Naive thymus-derived CD4-positive, alpha-beta T cell (primary cell): ENCODE measurements at regions of chr12 and their contacts with region 1.

Region 1: DNA sequence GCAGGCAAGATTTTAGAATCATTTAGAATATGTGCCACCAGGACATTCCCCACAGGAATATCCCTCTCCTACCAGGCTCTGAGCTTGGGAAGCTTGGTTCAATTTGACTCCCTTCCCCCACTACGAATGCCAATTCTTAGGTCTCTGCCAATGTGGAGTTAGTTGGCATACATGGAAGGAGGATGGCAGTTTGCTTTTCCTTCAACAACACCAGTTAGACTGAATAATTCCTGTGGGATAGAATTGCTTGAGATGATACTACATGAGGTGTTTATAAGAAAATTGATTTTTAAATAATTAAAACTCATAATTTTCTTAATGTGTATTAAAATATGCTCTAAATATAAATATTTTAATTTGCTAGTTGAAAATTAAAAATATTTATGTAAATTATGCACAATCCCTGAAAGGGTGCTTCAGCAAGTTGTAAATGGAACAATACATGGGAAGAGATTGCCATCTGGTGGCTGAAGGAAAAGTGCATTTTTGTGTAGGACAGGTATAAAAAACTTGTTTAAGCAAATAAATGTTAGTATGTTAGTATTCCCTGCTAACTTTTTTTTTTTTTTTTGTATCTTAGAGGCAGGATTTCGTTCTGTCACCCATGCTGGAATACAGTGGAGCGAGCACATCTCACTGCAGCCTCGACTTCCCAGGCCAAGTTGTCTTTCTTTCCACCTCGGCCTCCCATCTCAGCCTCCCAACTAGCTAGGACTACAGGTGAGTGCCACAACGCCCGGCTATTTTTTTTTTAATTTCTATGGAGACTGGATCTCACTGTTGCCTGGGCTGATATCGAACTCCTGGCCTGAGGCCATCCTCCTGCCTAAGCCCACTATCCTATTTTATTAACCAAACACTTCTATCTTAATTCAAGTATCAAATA is 25.8 kb upstream of the STRAP start:
- DNase-seq: peak in 7 of 9 donors; percentile 45 to 72 (median 64)
- ATAC-seq: peak; percentile 60
- H3K4me3 ChIP-seq: no peak overlapping the region
- H3K4me3 Mint-ChIP-seq: no peak overlapping the region
- H3K27ac ChIP-seq: no peak overlapping the region
- H3K27ac Mint-ChIP-seq: no peak overlapping the region
- H3K4me1 ChIP-seq: no peaks in the 10 kb centered on the region
- H3K4me1 Mint-ChIP-seq: no peaks in the 10 kb centered on the region
- H3K27me3 ChIP-seq: no peaks in the 10 kb centered on the region
- H3K27me3 Mint-ChIP-seq: peaks cover 7 to 35% (median 13%) of the 10 kb centered on the region in 5 donors

Region 2: DNA sequence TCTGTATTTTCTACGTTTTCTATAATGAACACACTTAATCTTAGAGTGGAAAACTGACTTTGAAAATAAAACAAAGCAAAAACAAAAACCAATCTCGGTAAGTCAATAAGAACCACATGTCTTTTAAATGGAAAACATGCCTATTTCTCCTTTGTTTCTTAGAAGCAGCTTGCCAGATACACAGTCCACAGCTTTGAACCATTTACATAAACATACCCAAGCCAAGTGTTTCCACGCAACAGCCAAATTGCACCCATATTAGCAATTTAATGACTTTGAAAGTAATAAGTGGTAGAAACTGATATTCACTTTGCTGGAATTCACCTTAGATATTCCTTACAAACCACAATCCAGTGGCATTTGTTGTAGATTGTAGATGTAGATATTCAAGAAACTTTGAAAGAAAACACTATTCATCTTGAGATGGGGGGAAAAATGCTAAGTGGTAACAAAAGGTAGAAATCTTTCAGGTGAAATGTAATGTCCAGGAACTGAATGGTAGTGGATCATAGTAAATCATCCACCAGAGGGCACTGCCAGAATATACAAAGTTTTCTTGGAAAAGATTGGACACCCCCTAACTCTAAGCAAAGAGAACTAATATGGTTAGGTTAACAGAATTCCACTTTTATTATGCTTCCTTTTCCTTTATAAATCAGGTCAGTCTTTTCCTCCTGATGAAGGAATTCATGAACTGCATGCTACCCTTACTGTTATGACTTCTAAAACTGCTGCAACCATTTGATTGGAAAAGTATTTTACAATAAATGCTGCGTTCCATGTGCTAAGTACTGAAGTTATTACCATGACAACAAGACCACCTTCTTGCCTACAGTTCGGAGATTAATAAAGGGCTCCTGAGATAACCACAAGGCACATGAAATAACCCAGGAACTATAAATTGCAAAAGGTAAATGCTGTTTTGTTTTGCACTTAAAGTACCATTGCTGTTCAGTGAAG is 704.9 kb before region 1 on chr12:
- CTCF ChIA-PET with region 1: no interaction called
- POLR2A ChIA-PET with region 1: no interaction called
- intact Hi-C with region 1: loop called in 1 of 2 experiments (anchors 10 kb)
- DNase-seq: peak in 2 of 9 donors; percentile 1
- ATAC-seq: no peak
- H3K4me3 ChIP-seq: no peak overlapping the region
- H3K4me3 Mint-ChIP-seq: no peak overlapping the region
- H3K27ac ChIP-seq: no peak overlapping the region
- H3K27ac Mint-ChIP-seq: no peak overlapping the region
- H3K4me1 ChIP-seq: no peaks in the 10 kb centered on the region
- H3K4me1 Mint-ChIP-seq: no peaks in the 10 kb centered on the region
- H3K27me3 ChIP-seq: no peaks in the 10 kb centered on the region
- H3K27me3 Mint-ChIP-seq: peaks cover 0 to 30% (median 7%) of the 10 kb centered on the region in 5 donors

Region 3: DNA sequence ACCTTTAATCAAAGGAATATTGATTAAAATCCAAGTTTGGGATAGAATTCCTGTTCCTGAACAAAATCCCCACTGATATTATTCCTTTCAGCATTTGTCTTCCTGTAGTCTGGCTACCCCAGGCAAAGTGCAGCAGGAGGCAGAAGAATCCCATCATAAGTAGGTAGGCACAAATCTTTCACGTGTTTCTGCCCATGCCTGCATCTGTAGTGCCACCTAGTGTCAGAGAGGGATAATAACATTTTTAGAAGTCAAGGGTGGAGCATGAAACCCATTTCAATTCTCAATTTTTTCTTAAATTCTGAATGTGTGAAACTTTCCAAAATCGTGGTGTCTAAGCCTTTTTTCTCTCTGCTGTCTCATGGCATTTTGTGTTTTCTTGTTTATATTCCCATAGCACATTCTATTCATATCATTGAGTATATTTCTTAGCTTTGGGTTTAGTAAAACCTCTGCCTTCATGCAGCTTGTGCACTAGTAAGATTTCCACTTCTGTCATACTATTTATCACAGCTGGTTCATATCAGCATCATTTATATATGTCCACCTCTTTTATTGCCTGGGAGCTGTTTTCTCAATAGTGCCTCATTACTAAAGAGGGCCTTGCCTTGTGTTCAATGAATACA is 587.3 kb before region 1 on chr12:
- CTCF ChIA-PET with region 1: no interaction called
- POLR2A ChIA-PET with region 1: no interaction called
- intact Hi-C with region 1: loop called in 1 of 2 experiments (anchors 1 kb)
- DNase-seq: peak in 7 of 9 donors; percentile 28 to 65 (median 56)
- ATAC-seq: peak; percentile 79
- H3K4me3 ChIP-seq: no peak overlapping the region
- H3K4me3 Mint-ChIP-seq: no peak overlapping the region
- H3K27ac ChIP-seq: no peak overlapping the region
- H3K27ac Mint-ChIP-seq: no peak overlapping the region
- H3K4me1 ChIP-seq: no peaks in the 10 kb centered on the region
- H3K4me1 Mint-ChIP-seq: no peaks in the 10 kb centered on the region
- H3K27me3 ChIP-seq: no peaks in the 10 kb centered on the region
- H3K27me3 Mint-ChIP-seq: peaks cover 2 to 11% (median 5%) of the 10 kb centered on the region in 5 donors

Region 4: DNA sequence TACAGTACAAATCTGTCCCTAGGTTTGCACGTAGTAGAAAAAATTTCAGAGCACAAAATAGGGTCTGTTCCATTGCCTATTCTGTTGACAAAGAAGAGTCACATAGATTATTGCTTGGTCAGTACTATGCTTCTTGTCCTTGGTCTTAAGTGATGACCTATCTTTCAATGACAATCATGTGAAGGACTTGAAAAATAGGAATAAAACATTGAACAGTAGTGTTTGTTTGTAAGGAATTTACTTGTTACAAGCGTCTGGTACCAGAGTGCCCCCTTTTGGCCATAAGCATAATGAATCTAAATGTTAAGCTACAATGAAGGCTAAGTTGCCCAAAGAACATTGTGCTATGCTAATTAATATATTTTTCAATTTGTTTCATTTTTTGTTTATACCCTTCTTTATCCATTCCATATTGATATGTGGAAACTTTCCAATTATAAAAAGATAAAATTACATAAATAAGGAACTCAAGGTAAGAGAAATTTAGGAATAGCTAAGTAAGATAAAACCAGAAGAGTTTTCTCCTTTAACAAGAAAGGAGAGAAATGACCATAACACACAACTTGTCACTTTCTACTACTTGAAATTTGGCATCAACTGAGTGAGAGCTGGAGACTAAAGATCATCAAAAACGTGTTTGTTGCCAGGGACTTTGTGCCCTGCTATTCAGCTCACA is 271.8 kb before region 1 on chr12:
- CTCF ChIA-PET with region 1: interaction called, 45 read pairs
- POLR2A ChIA-PET with region 1: no interaction called
- intact Hi-C with region 1: no loop called
- DNase-seq: peak in 7 of 9 donors; percentile 40 to 65 (median 56)
- ATAC-seq: peak; percentile 78
- H3K4me3 ChIP-seq: no peak overlapping the region
- H3K4me3 Mint-ChIP-seq: no peak overlapping the region
- H3K27ac ChIP-seq: no peak overlapping the region
- H3K27ac Mint-ChIP-seq: no peak overlapping the region
- H3K4me1 ChIP-seq: peaks cover 0 to 4% of the 10 kb centered on the region in 2 donors
- H3K4me1 Mint-ChIP-seq: peaks cover 1 to 21% (median 15%) of the 10 kb centered on the region in 7 donors
- H3K27me3 ChIP-seq: no peaks in the 10 kb centered on the region
- H3K27me3 Mint-ChIP-seq: peaks cover 0 to 3% (median 0%) of the 10 kb centered on the region in 5 donors

Region 5: DNA sequence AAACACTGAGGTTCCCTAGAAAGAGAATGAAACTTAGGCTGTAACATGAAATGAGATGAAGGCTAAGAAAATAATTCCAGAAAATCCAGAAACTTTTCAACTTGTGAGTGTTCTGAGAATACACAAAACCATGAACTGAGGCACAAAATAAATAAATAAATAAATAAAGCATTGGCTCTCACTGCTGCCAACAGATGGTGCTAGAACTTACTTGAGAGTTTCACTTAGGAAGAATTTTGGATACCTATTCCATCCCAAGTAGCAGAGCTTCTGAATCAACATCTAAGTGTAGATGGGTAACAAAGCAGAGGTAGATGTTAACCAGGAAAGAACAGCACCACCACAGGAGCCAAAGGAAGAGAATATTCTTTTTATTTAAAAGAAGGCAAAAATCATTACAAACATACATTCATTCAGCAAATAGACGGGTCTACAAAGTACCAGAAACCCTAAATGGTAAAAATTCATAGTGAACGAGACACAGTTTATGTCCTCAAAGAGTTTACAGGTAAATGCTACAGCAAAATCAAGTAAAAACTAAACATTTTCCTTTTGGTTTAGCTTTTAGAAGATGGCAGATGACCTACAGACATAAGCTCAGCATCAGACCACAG is 83.8 kb before region 1 on chr12:
- CTCF ChIA-PET with region 1: interaction called, 15 read pairs
- POLR2A ChIA-PET with region 1: no interaction called
- intact Hi-C with region 1: loop called (anchors 1 to 2 kb)
- DNase-seq: peak in 1 of 9 donors; percentile 11
- ATAC-seq: no peak
- H3K4me3 ChIP-seq: no peak overlapping the region
- H3K4me3 Mint-ChIP-seq: no peak overlapping the region
- H3K27ac ChIP-seq: no peak overlapping the region
- H3K27ac Mint-ChIP-seq: no peak overlapping the region
- H3K4me1 ChIP-seq: no peaks in the 10 kb centered on the region
- H3K4me1 Mint-ChIP-seq: no peaks in the 10 kb centered on the region
- H3K27me3 ChIP-seq: no peaks in the 10 kb centered on the region
- H3K27me3 Mint-ChIP-seq: peaks cover 10 to 23% (median 15%) of the 10 kb centered on the region in 5 donors

Region 6: GRCh38 chr12:15830538-15830937 is 25.8 kb before region 1 on chr12:
- CTCF ChIA-PET with region 1: no interaction called
- POLR2A ChIA-PET with region 1: no interaction called
- intact Hi-C with region 1: no loop called
- DNase-seq: no peak
- ATAC-seq: no peak
- H3K4me3 ChIP-seq: no peak overlapping the region
- H3K4me3 Mint-ChIP-seq: no peak overlapping the region
- H3K27ac ChIP-seq: no peak overlapping the region
- H3K27ac Mint-ChIP-seq: no peak overlapping the region
- H3K4me1 ChIP-seq: no peaks in the 10 kb centered on the region
- H3K4me1 Mint-ChIP-seq: peaks cover 0 to 2% (median 0%) of the 10 kb centered on the region in 7 donors
- H3K27me3 ChIP-seq: no peaks in the 10 kb centered on the region
- H3K27me3 Mint-ChIP-seq: peaks cover 0 to 13% (median 8%) of the 10 kb centered on the region in 5 donors

Region 7: GRCh38 chr12:15899282-15899870 is 43.0 kb after region 1 on chr12:
- CTCF ChIA-PET with region 1: interaction called, 4 read pairs
- POLR2A ChIA-PET with region 1: no interaction called
- intact Hi-C with region 1: loop called in 1 of 2 experiments (anchors 1 kb)
- DNase-seq: peak in 5 of 9 donors; percentile 22 to 32 (median 31)
- ATAC-seq: peak; percentile 72
- H3K4me3 ChIP-seq: no peak overlapping the region
- H3K4me3 Mint-ChIP-seq: no peak overlapping the region
- H3K27ac ChIP-seq: no peak overlapping the region
- H3K27ac Mint-ChIP-seq: peak overlapping the region in 6 of 9 donors; percentile 25 to 74 (median 53)
- H3K4me1 ChIP-seq: no peaks in the 10 kb centered on the region
- H3K4me1 Mint-ChIP-seq: peaks cover 0 to 13% (median 7%) of the 10 kb centered on the region in 7 donors
- H3K27me3 ChIP-seq: no peaks in the 10 kb centered on the region
- H3K27me3 Mint-ChIP-seq: no peaks in the 10 kb centered on the region